B cell (primary cell): ENCODE measurements at regions of chr3 and their contacts with region 1.

Region 1: GRCh38 chr3:132641837-132642538 is 17.6 kb downstream of the ACAD11 start:
- DNase-seq: peak; percentile 54
- ATAC-seq: no peak
- H3K4me3 ChIP-seq: no peak overlapping the region
- H3K4me3 Mint-ChIP-seq: no peak overlapping the region
- H3K27ac ChIP-seq: no peak overlapping the region
- H3K27ac Mint-ChIP-seq: no peak overlapping the region
- H3K4me1 ChIP-seq: no peaks in the 10 kb centered on the region
- H3K4me1 Mint-ChIP-seq: peaks cover 2% of the 10 kb centered on the region
- H3K27me3 ChIP-seq: no peaks in the 10 kb centered on the region
- H3K27me3 Mint-ChIP-seq: no peaks in the 10 kb centered on the region
- CTCF ChIP-seq: peak; percentile 89

Region 2: DNA sequence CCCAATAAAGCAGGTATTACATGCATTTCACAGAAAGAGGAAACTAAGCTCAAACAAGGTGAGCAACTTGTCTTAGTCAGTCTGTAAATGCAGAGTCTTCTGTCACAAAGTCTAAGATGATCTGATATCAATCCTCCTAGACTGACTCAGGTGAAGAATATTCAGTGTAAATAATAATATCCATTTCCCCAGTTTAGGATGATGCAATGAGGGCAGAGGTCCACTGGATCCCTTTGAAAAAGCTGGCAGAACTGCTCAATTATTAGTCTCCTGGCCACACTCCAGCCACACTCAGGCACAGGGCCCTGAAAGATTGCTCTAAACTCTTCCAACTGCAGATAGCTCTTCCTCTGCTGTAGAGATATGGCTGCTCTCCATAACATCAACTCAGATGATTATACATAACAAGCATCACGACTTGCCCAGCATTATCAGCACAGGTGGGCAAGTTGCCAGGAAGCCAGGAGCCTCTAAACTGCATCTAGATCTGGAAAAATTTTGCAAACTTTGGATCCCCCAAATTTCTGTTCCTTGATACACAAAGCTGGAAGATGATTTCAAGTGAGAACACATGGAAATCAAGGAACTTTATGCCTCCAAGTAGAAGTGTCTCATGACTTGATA is 477.4 kb before region 1 on chr3:
- CTCF ChIA-PET with region 1: no interaction called
- POLR2A ChIA-PET with region 1: no interaction called
- intact Hi-C with region 1: no loop called
- DNase-seq: no peak
- ATAC-seq: no peak
- H3K4me3 ChIP-seq: no peak overlapping the region
- H3K4me3 Mint-ChIP-seq: no peak overlapping the region
- H3K27ac ChIP-seq: no peak overlapping the region
- H3K27ac Mint-ChIP-seq: no peak overlapping the region
- H3K4me1 ChIP-seq: no peaks in the 10 kb centered on the region
- H3K4me1 Mint-ChIP-seq: no peaks in the 10 kb centered on the region
- H3K27me3 ChIP-seq: no peaks in the 10 kb centered on the region
- H3K27me3 Mint-ChIP-seq: peaks cover 18% of the 10 kb centered on the region
- CTCF ChIP-seq: no peak

Region 3: DNA sequence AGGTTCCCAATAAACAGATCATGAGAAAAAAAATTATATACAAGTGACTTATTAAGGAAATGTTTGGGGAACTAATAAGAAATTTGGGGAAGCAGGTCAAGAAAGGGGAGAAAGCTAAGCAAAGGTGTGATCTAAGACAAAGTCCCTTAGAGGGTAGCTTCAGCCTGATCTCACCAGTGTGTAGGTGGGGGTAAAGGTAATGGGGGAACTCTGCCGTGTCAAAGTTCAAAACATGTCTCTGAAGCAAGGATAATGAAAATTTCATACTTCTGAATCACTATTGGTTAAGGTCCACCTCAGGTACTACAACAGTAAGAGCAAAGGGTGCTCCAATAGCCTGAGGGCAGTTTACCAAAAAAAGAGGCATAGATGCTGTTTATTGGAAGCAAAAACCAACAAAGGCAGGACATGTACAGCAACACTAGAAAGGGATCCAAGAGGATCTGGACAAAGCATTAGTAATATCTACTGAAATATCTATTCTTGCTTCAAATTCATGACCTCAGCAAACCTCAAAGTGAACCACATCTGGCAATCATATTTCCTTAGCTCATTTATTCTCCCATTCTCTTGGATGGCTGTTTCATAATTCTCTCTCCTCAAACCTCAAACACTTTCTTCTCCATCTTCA is 10.8 kb after region 1 on chr3:
- CTCF ChIA-PET with region 1: interaction called, 12 read pairs
- POLR2A ChIA-PET with region 1: no interaction called
- intact Hi-C with region 1: no loop called
- DNase-seq: no peak
- ATAC-seq: no peak
- H3K4me3 ChIP-seq: no peak overlapping the region
- H3K4me3 Mint-ChIP-seq: no peak overlapping the region
- H3K27ac ChIP-seq: no peak overlapping the region
- H3K27ac Mint-ChIP-seq: no peak overlapping the region
- H3K4me1 ChIP-seq: no peaks in the 10 kb centered on the region
- H3K4me1 Mint-ChIP-seq: no peaks in the 10 kb centered on the region
- H3K27me3 ChIP-seq: no peaks in the 10 kb centered on the region
- H3K27me3 Mint-ChIP-seq: no peaks in the 10 kb centered on the region
- CTCF ChIP-seq: no peak

Region 4: GRCh38 chr3:133691410-133692107 is 1049.6 kb after region 1 on chr3:
- CTCF ChIA-PET with region 1: no interaction called
- POLR2A ChIA-PET with region 1: no interaction called
- intact Hi-C with region 1: no loop called
- DNase-seq: no peak
- ATAC-seq: no peak
- H3K4me3 ChIP-seq: no peak overlapping the region
- H3K4me3 Mint-ChIP-seq: no peak overlapping the region
- H3K27ac ChIP-seq: no peak overlapping the region
- H3K27ac Mint-ChIP-seq: no peak overlapping the region
- H3K4me1 ChIP-seq: no peaks in the 10 kb centered on the region
- H3K4me1 Mint-ChIP-seq: no peaks in the 10 kb centered on the region
- H3K27me3 ChIP-seq: no peaks in the 10 kb centered on the region
- H3K27me3 Mint-ChIP-seq: peaks cover 10% of the 10 kb centered on the region
- CTCF ChIP-seq: no peak